ENCODE measurements at regions of chr1 and their contacts with region 1.

Region 1: GRCh38 chr1:19240673-19241538 is 10.4 kb downstream of the EMC1 start:
- DNase-seq: peak; percentile 63 to 82
- ATAC-seq: peak; percentile 95
- H3K4me3 ChIP-seq: no peak overlapping the region
- H3K27ac ChIP-seq: no peak overlapping the region
- H3K4me1 ChIP-seq: no peaks in the 10 kb centered on the region
- CTCF ChIP-seq: peak; percentile 64
- EP300 ChIP-seq: no peak
- POLR2A ChIP-seq: no peak
- RAD21 ChIP-seq: peak; percentile 62 to 64

Region 2: DNA sequence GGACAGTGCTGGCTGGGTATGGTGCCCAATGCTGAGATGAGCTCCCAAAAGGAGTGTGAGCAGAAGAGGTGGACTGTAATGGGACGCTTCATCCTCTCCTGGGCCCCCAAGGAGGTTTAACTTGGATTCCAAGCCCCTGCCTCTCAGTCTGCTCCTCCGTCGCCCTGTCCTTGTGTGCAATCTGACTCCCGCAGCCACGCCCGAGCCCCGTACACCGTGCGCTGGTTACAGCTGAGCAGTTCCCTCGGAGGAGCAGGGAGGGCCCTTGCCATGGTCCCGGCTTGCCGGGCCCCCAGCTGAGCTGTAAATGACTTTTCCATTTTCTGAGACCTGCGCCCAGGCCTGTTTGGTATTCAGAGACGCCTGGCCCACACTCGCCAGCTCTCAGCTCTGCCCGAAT is 556.6 kb before region 1 on chr1:
- CTCF ChIA-PET with region 1: no interaction called
- POLR2A ChIA-PET with region 1: no interaction called
- DNase-seq: no peak
- ATAC-seq: no peak
- H3K4me3 ChIP-seq: no peak overlapping the region
- H3K27ac ChIP-seq: no peak overlapping the region
- H3K4me1 ChIP-seq: no peaks in the 10 kb centered on the region
- CTCF ChIP-seq: no peak
- EP300 ChIP-seq: no peak
- POLR2A ChIP-seq: no peak
- RAD21 ChIP-seq: no peak

Region 3: DNA sequence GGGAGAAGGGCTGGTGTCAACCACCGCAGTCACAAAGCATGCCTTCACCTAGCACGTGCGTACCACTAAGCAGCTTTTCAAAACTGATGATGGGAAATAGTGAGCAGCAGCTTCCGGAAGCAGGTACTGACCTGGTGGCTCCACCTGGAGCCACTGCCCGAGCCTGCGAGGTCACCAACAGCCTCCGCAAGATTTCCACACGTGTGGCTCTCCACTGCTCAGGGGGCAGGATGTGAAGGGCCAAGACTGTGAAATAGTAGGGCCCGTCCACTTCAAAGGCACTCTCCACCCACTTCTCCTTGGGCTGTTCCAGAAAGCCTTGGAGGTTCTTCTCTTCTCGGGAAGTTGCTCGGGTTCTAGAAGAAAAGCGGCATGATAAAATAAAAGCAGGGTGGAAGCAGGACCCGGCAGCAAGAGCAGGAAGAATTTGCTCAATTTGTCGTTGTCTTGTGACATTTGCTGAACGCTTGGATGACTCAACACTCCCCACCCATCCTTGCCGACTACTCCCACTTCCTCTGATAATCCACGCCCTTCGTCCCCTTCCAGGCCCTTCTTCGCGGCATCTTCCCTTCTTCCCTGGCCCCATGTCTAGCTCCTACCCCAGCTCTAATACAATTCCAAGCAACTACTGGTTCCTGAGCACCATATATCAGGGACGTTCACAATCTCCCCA is 159.6 kb before region 1 on chr1:
- CTCF ChIA-PET with region 1: no interaction called
- POLR2A ChIA-PET with region 1: no interaction called
- DNase-seq: peak; percentile 25 to 69
- ATAC-seq: peak; percentile 54 to 68; a peak in 4 of 6 replicates
- H3K4me3 ChIP-seq: peak overlapping the region; percentile 38
- H3K27ac ChIP-seq: peak overlapping the region; percentile 88 to 95
- H3K4me1 ChIP-seq: peaks cover 46% of the 10 kb centered on the region
- CTCF ChIP-seq: no peak
- EP300 ChIP-seq: no peak
- POLR2A ChIP-seq: no peak
- RAD21 ChIP-seq: no peak

Region 4: GRCh38 chr1:19257178-19257914 is 16.4 kb after region 1 on chr1:
- CTCF ChIA-PET with region 1: interaction called, 12 read pairs
- POLR2A ChIA-PET with region 1: interaction called, 5 read pairs
- DNase-seq: no peak
- ATAC-seq: no peak
- H3K4me3 ChIP-seq: no peak overlapping the region
- H3K27ac ChIP-seq: no peak overlapping the region
- H3K4me1 ChIP-seq: peaks cover 16% of the 10 kb centered on the region; the same call in 2 of the 3 replicates
- CTCF ChIP-seq: no peak
- EP300 ChIP-seq: no peak
- POLR2A ChIP-seq: no peak
- RAD21 ChIP-seq: no peak

Region 5: GRCh38 chr1:19262733-19263132 is 21.8 kb after region 1 on chr1:
- CTCF ChIA-PET with region 1: interaction called, 10 read pairs
- POLR2A ChIA-PET with region 1: no interaction called
- DNase-seq: no peak
- ATAC-seq: peak in 1 of 2 experiments; percentile 16; a peak in 3 of 6 replicates
- H3K4me3 ChIP-seq: no peak overlapping the region
- H3K27ac ChIP-seq: no peak overlapping the region
- H3K4me1 ChIP-seq: no peaks in the 10 kb centered on the region
- CTCF ChIP-seq: no peak
- EP300 ChIP-seq: no peak
- POLR2A ChIP-seq: no peak
- RAD21 ChIP-seq: no peak

Region 6: DNA sequence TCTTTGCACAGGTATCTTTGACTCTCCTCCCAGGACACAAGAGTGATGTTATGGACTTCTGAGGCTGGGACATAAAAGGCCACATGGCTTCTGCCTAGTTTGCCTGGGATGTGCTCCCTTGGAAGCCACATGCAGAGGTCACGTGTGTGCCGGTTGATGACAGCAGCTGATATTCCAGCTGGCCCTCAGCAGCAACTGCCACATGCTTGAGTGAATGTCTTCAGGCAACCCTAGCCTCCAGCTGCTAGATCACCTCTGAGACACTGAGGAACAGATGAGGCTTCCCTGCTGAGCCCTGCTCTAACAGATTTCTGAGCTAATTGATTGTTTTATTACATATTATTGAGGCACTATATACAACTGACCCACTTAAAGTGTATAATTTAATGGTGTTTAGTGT is 59.3 kb after region 1 on chr1:
- CTCF ChIA-PET with region 1: no interaction called
- POLR2A ChIA-PET with region 1: no interaction called
- DNase-seq: no peak
- ATAC-seq: no peak
- H3K4me3 ChIP-seq: no peak overlapping the region
- H3K27ac ChIP-seq: no peak overlapping the region
- H3K4me1 ChIP-seq: no peaks in the 10 kb centered on the region
- CTCF ChIP-seq: no peak
- EP300 ChIP-seq: no peak
- POLR2A ChIP-seq: no peak
- RAD21 ChIP-seq: no peak